PC-3 (cell line): ENCODE measurements at regions of chr7 and their contacts with region 1.

Region 1: DNA sequence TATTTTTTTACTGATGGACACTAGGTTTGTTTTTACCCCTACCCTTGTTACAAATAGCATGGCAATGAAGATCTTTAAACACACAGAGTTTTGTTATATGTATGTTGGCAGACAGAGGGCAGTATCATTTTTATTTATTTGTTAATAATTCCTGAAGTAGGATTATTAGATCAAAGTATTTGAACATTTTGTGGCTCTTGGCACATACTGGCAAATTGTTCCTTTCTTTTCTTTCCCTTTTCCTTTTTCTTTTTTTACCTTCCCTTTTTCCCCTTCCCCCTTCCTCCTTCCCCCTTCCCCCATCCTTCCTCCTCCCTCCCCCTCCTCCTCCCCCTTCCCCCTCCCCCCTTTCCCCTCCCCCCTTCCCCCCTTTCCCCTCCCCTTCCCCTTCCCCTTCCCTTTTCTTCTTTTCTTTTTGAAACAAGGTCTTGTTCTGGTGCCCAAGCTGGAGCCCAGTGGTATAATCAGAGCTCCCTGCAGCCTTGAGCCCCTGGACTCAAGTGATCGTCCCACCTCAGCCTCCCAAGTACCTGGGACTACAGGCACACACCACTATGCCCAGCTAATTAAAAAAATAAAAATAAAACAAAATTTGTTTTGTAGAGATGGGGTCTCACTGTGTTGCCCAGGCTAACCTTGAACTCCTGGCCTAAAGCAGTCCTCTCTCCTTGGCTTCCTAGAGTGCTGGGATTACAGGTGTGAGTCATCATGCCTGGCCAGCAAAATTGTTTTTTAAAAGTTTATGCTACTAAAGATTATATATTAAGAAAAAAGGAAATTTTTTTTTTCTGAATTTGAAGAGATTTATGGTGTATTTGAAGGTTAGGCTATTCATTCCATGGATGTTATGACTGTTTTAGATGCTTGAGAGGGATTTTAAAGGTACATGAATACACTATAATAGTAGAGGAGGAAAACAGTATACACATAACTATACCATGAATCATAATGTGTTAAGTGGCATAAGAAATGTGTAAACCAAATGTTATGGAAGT is 39.3 kb downstream of the SEPTIN7 start:
- DNase-seq: peak; percentile 48
- ATAC-seq: peak; percentile 97
- H3K4me3 ChIP-seq: no peak overlapping the region
- H3K27ac ChIP-seq: no peak overlapping the region
- H3K4me1 ChIP-seq: no peaks in the 10 kb centered on the region; the same call in 1 of the 2 replicates
- H3K27me3 ChIP-seq: no peaks in the 10 kb centered on the region
- CTCF ChIP-seq: peak; percentile 21; the same call in 1 of the 2 replicates

Region 2: GRCh38 chr7:35875292-35875691 is 35.1 kb after region 1 on chr7:
- CTCF ChIA-PET with region 1: no interaction called
- POLR2A ChIA-PET with region 1: no interaction called
- intact Hi-C with region 1: loop called (anchors 5 kb)
- DNase-seq: no peak
- ATAC-seq: no peak
- H3K4me3 ChIP-seq: no peak overlapping the region
- H3K27ac ChIP-seq: no peak overlapping the region
- H3K4me1 ChIP-seq: no peaks in the 10 kb centered on the region
- H3K27me3 ChIP-seq: no peaks in the 10 kb centered on the region
- CTCF ChIP-seq: no peak